Activated T-helper 1 cell treated with anti-CD3 and anti-CD28 coated beads, Interleukin-12 subunit alpha, Interleukin-12 subunit beta, Interleukin-2, Interleukin-4 antibody, amounts not matched to agents 30 ng/mL and 10 ng/mL and 1 ng/mL, durations not matched to agents 14 hours and 24 hours and 36 hours (primary cell): ENCODE measurements at regions of chr9 and their contacts with region 1.

Region 1: DNA sequence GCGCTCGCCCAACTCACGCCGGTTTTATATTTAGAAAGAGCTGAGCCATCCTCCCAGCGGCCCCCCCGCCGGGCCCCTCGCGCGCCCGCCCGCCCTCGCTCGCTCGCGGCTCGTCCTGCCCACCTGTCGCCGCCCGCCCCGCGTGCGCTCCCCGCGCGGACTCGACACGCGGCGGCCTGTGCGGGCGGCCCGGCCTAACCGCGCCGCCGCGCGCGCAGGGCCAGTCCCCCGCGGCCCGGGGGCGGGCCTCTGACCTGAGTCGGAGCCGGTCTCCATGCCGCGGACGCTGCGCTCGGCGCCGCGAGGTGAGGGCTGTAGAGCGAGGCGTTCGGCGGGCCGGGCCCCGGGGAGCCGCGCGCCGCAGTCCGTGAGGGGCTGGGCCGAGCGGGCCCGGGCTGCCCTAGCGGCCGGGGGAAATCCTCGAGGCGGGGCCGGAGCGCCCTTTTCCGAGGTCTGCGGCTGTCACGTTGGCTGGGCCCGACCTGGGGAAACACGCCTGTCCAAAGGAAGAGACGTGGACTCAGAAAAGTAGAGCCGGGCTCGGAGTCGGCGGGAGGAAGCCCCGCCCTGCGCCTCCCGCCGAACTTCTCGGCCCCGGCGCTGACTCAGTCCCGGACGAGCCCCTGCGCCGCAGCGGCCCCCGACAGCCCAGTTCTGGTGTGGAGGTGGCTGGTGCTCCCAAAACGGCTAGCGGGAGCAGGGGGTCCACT is at the start of gene ECPAS:
- DNase-seq: peak; percentile 65
- H3K4me3 Mint-ChIP-seq: peak within 1 kb of the TSS; percentile 87
- H3K27ac Mint-ChIP-seq: peak within 1 kb of the TSS; percentile 86
- H3K4me1 Mint-ChIP-seq: peaks cover 34% of the 10 kb centered on the region
- H3K27me3 Mint-ChIP-seq: peaks cover 3% of the 10 kb centered on the region
- total RNA-seq, gene ECPAS: 98.9 and 110 TPM in 2 replicates

Region 2: DNA sequence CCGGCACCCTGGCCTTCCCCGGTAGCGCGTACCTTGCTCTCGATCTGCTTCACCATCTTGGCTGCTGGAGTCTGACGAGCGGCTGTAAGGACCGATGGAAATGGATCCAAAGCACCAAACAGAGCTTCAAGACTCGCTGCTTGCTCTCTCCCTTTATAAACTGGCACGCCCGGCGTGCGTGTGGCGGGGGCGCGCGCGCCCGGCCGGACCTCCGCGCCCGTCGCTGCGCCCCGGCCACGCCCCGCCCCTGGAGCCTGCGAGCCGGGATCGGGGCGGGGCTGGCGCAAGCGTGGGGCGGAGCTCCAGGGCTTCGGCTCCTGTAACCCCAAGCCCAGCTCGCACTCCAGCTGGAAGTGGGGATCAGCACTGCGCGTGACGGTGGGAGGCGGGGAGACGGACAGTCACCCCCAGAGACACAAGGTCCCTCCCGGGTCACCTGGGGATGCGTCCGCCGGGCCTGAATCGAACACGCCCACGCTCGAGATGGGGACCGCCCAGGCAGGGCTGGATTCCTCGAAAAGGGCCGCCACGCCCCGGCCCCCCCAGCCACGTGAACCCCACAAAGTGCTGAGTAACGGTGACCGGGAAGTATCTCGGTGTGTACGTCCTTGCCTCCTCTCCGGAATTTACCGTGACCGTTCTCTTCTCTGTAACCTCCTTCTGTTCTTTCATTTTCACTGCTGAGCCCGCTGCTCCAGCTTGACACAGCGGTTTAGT is 1227.5 kb before region 1 on chr9 and contains the start of gene TXN:
- intact Hi-C with region 1: loop called (anchors 2 kb)
- DNase-seq: peak; percentile 85
- H3K4me3 Mint-ChIP-seq: peak within 1 kb of the TSS; percentile 98
- H3K27ac Mint-ChIP-seq: peak within 1 kb of the TSS; percentile 100
- H3K4me1 Mint-ChIP-seq: peaks cover 59% of the 10 kb centered on the region
- H3K27me3 Mint-ChIP-seq: peaks cover 10% of the 10 kb centered on the region
- total RNA-seq, gene TXN: 412 and 422 TPM in 2 replicates

Region 3: GRCh38 chr9:111212874-111213273 is 271.1 kb before region 1 on chr9:
- intact Hi-C with region 1: no loop called
- DNase-seq: no peak
- H3K4me3 Mint-ChIP-seq: no peak overlapping the region
- H3K27ac Mint-ChIP-seq: no peak overlapping the region
- H3K4me1 Mint-ChIP-seq: no peaks in the 10 kb centered on the region
- H3K27me3 Mint-ChIP-seq: no peaks in the 10 kb centered on the region

Region 4: DNA sequence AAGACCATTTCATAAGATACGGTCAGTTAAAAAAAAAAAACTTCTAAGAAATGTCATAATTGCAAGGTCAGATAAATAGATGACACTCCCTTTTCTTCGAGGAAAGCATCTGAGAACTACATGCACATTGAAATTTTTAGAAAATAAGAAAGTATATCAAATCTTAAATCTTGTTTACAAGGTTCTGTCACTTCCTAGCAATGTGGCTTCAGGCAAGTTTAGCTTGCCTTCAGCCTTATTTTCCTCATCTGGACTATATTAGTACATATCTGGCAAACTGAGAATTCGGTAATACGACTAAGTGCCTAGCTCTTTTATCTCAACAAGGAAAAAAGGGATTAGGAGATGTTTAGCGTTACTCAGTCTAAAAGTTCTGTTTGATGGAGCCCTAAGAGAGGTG is 121.5 kb before region 1 on chr9:
- intact Hi-C with region 1: no loop called
- DNase-seq: no peak
- H3K4me3 Mint-ChIP-seq: no peak overlapping the region
- H3K27ac Mint-ChIP-seq: no peak overlapping the region
- H3K4me1 Mint-ChIP-seq: no peaks in the 10 kb centered on the region
- H3K27me3 Mint-ChIP-seq: no peaks in the 10 kb centered on the region

Region 5: GRCh38 chr9:111525056-111525977 is 41.3 kb after region 1 on chr9 and contains the start of gene ZNF483:
- intact Hi-C with region 1: loop called (anchors 1 kb)
- DNase-seq: peak; percentile 61
- H3K4me3 Mint-ChIP-seq: peak within 1 kb of the TSS; percentile 88
- H3K27ac Mint-ChIP-seq: peak within 1 kb of the TSS; percentile 81
- H3K4me1 Mint-ChIP-seq: peaks cover 20% of the 10 kb centered on the region
- H3K27me3 Mint-ChIP-seq: peaks cover 4% of the 10 kb centered on the region
- total RNA-seq, gene ZNF483: 2.4 and 3.5 TPM in 2 replicates

Region 6: GRCh38 chr9:111631071-111631971 is 147.3 kb after region 1 on chr9 and contains the start of gene DNAJC25:
- intact Hi-C with region 1: loop called (anchors 1 kb)
- DNase-seq: peak; percentile 97
- H3K4me3 Mint-ChIP-seq: peak within 1 kb of the TSS; percentile 98
- H3K27ac Mint-ChIP-seq: peak within 1 kb of the TSS; percentile 93
- H3K4me1 Mint-ChIP-seq: peaks cover 54% of the 10 kb centered on the region
- H3K27me3 Mint-ChIP-seq: peaks cover 3% of the 10 kb centered on the region
- total RNA-seq, gene DNAJC25: 5.8 and 6.1 TPM in 2 replicates

Region 7: GRCh38 chr9:112037281-112038016 is 553.4 kb after region 1 on chr9:
- intact Hi-C with region 1: loop called (anchors 10 kb)
- DNase-seq: peak; percentile 74
- H3K4me3 Mint-ChIP-seq: peak overlapping the region; percentile 43
- H3K27ac Mint-ChIP-seq: peak overlapping the region; percentile 82
- H3K4me1 Mint-ChIP-seq: peaks cover 53% of the 10 kb centered on the region
- H3K27me3 Mint-ChIP-seq: peaks cover 16% of the 10 kb centered on the region

Region 8: DNA sequence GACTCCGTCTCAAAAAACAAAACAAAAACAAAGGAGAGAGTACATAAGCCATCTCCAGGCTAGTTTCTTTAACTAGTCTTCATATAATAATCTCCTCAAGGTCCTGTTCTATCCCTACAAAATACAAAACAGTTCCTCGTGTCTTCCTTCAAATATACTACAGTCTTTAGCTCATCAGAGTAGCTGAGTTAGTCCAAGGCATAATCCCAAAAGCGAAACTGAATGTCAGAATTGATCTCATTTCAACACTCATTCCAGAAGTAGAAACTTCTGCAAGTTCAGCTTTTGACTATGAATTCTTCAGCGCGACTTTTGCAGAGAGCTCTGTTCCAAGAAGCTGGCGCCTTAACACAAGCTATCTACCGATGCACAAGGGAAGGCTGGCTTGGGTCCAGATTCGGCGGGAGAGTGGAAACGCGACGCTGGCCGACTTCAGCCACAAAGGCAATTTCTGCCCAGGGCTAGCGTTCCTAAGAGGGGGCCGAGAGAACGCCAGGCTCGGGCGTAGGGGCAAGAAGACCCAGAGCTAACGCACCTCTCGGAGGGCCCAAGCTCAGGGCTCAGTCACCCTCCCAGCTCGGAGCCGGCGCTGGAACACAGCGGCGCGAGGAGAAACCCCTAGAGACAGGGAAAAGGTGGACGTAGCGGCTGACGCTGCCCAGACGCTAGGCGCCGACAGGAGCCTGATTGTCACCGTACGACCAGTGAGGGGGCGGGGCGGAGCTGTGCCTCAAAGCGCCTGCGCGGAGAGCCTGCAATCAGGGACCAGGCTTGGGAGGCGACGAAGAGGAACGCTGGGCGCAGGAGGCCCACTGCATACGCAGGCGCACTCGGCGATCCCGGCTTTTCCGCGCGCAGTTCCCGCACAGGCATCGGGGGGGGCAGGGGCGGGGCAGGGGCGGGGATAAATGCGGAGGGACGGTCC is 895.4 kb after region 1 on chr9:
- intact Hi-C with region 1: loop called (anchors 2 kb)
- DNase-seq: peak; percentile 97
- H3K4me3 Mint-ChIP-seq: peak overlapping the region; percentile 98
- H3K27ac Mint-ChIP-seq: peak overlapping the region; percentile 99
- H3K4me1 Mint-ChIP-seq: peaks cover 52% of the 10 kb centered on the region
- H3K27me3 Mint-ChIP-seq: no peaks in the 10 kb centered on the region

Region 9: DNA sequence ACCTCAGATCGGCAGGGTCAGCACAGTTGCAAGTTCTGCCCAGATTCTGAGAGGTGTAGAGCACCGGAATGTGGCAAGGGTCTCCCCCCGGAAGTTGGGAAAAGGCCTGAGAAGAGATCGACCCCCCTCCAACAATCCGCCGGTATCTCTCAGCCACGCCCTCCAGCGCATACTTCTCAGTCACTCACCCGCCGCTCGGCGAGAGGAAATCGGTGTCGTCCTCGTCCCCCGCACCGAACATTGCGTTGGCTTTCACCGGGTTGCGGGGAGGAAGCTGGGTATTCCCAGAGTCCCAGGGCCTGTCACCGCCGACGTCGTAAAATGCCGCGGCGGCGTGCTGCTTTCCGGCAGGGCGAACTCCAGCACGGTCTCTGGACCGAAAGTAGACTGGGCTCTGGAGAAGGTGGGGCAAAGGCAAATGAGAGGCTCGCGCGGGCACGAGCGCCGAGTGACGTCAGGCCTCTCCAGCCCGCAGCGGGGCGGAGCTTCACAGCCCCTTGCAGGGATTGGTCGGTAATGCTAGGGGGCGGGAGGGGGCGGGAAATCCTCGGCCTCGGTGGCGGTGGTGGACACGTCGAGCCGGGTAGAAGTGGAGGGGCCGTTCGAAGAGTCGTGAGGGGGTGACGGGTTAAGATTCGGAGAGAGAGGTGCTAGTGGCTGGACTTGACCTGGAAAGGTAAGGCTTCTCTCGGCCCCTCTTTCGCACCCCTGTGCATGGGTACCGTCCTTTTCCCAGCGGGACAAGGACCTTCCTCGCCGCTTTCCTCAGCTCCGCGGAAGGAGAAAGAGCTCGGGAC is 1737.2 kb after region 1 on chr9 and contains the starts of genes FKBP15 and SLC31A1:
- intact Hi-C with region 1: loop called (anchors 2 kb)
- DNase-seq: peak; percentile 96
- H3K4me3 Mint-ChIP-seq: peak within 1 kb of the TSS; percentile 98
- H3K27ac Mint-ChIP-seq: peak within 1 kb of the TSS; percentile 97
- H3K4me1 Mint-ChIP-seq: peaks cover 64% of the 10 kb centered on the region
- H3K27me3 Mint-ChIP-seq: no peaks in the 10 kb centered on the region
- total RNA-seq, gene FKBP15: 34.9 and 35.8 TPM in 2 replicates
- total RNA-seq, gene SLC31A1: 16.1 and 17.6 TPM in 2 replicates